Activated naive CD4-positive, alpha-beta T cell treated with anti-CD3 and anti-CD28 coated beads for 36 hours (primary cell): ENCODE measurements at regions of chr1 and their contacts with region 1.

Region 1: DNA sequence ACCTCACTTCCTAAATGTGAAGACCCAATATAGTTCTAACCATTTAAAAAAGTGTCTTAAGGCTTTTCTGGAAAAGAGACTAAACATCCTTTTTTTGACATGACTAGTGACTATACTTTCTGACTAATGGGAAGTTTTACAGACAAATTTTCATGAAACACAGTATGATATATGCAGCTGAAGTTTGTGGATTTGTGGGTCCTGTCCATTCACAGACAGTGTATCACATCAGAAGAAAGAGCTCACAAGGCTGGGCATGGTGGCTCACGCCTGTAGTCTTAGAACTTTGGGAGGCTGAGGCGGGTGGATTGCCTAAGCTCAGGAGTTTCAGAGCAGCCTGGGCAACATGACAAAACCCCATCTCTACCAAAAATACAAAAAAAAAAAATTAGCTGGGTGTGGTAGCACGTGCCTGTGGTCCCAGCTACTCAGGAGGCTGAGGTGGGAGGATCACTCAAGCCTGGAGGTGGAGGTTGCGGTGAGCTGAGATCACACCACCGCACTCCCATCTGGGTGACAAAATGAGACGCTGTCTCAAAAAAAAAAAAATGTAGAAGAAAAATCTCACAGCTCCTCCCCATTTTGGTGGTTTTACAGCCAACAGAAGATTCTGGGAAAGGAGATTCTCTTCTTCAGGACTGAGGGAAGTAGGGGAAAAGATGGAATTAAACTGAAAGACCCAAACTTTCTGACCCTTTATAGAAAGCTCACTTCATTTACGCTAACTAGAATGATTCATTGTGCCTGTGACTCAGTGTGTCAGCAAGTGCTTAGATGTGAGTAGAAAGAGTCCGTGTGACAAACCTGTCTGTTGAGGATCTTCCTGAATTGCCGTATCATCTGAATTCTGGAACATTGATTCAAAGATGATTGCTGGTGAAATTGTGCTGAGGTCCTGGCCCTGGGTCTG is 15.2 kb upstream of the YRDC start:
- DNase-seq: no peak
- H3K4me3 Mint-ChIP-seq: no peak overlapping the region
- H3K27ac Mint-ChIP-seq: peak overlapping the region; percentile 78
- H3K4me1 Mint-ChIP-seq: peaks cover 17% of the 10 kb centered on the region
- H3K27me3 Mint-ChIP-seq: no peaks in the 10 kb centered on the region

Region 2: GRCh38 chr1:37741130-37741529 is 82.0 kb before region 1 on chr1:
- CTCF ChIA-PET with region 1: no interaction called
- intact Hi-C with region 1: no loop called
- DNase-seq: no peak
- H3K4me3 Mint-ChIP-seq: no peak overlapping the region
- H3K27ac Mint-ChIP-seq: no peak overlapping the region
- H3K4me1 Mint-ChIP-seq: peaks cover 6% of the 10 kb centered on the region
- H3K27me3 Mint-ChIP-seq: peaks cover 25% of the 10 kb centered on the region

Region 3: DNA sequence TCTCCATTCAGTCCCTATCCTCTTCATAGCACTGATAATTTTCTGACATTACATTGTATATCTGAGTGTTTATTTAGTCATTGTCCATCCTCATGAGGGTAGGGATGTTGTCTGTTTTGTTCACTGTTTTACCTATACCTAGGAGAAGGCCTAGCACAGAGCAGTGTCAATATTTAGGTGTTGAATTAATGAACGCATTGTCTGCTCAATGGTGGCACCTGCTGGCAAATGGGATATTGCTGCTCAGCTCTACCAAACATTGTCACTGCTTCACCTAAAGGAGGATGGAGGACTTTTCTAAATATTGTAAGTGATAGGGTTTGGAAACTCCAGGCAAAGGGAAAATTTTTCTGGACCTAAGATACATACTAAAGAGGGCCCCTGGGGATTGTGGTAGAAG is 792.5 kb after region 1 on chr1:
- CTCF ChIA-PET with region 1: interaction called, 10 read pairs
- intact Hi-C with region 1: no loop called
- DNase-seq: peak; percentile 18
- H3K4me3 Mint-ChIP-seq: no peak overlapping the region
- H3K27ac Mint-ChIP-seq: no peak overlapping the region
- H3K4me1 Mint-ChIP-seq: no peaks in the 10 kb centered on the region
- H3K27me3 Mint-ChIP-seq: peaks cover 3% of the 10 kb centered on the region